Activated CD4-positive, alpha-beta memory T cell treated with anti-CD3 and anti-CD28 coated beads for 36 hours (primary cell): ENCODE measurements at regions of chr12 and their contacts with region 1.

Region 1: DNA sequence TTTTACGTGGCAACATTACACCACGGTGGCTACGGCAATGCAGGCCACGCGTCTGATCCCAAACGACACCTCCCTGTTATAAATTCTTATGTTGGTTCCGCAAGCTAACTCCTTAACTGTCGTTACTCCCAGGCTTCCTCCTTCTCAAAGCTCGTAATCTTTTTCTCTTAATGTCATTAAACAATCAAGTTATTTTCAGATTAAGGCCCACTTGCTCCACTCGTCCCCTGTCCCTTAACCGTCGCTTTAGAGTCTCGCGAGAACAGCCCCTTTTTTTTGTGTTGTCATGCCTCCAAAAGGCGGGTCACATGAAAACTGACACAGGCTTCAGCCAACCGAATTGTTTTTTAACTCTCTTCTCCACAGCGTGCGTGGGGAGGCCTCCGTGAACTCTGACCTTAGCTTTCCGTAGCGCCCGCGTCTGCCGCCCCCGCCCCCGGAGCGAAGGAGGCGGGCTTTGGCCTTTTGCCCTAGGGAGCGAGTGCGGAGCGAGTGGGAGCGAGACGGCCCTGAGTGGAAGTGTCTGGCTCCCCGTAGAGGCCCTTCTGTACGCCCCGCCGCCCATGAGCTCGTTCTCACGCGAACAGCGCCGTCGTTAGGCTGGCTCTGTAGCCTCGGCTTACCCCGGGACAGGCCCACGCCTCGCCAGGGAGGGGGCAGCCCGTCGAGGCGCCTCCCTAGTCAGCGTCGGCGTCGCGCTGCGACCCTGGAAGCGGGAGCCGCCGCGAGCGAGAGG is at the start of gene CAND1:
- DNase-seq: peak; percentile 96
- H3K4me3 Mint-ChIP-seq: peak within 1 kb of the TSS; percentile 95
- H3K27ac Mint-ChIP-seq: peak within 1 kb of the TSS; percentile 98
- H3K4me1 Mint-ChIP-seq: peaks cover 31% of the 10 kb centered on the region
- H3K27me3 Mint-ChIP-seq: no peaks in the 10 kb centered on the region
- total RNA-seq, gene CAND1: 213 to 219 TPM

Region 2: GRCh38 chr12:66288121-66288520 is 980.9 kb before region 1 on chr12:
- CTCF ChIA-PET with region 1: no interaction called
- POLR2A ChIA-PET with region 1: no interaction called
- intact Hi-C with region 1: loop called (anchors 10 kb)
- DNase-seq: peak; percentile 67
- H3K4me3 Mint-ChIP-seq: peak overlapping the region; percentile 49
- H3K27ac Mint-ChIP-seq: peak overlapping the region; percentile 44
- H3K4me1 Mint-ChIP-seq: peaks cover 62% of the 10 kb centered on the region
- H3K27me3 Mint-ChIP-seq: no peaks in the 10 kb centered on the region

Region 3: GRCh38 chr12:67161322-67161918 is 107.6 kb before region 1 on chr12:
- CTCF ChIA-PET with region 1: interaction called, 9 read pairs
- POLR2A ChIA-PET with region 1: interaction called, 3 read pairs
- intact Hi-C with region 1: loop called (anchors 1 kb)
- DNase-seq: peak; percentile 45
- H3K4me3 Mint-ChIP-seq: no peak overlapping the region
- H3K27ac Mint-ChIP-seq: no peak overlapping the region
- H3K4me1 Mint-ChIP-seq: no peaks in the 10 kb centered on the region
- H3K27me3 Mint-ChIP-seq: peaks cover 2% of the 10 kb centered on the region

Region 4: GRCh38 chr12:67452119-67452805 is 183.2 kb after region 1 on chr12:
- CTCF ChIA-PET with region 1: no interaction called
- POLR2A ChIA-PET with region 1: interaction called, 4 read pairs
- intact Hi-C with region 1: loop called (anchors 5 kb)
- DNase-seq: peak; percentile 42
- H3K4me3 Mint-ChIP-seq: peak overlapping the region; percentile 1
- H3K27ac Mint-ChIP-seq: no peak overlapping the region
- H3K4me1 Mint-ChIP-seq: peaks cover 48% of the 10 kb centered on the region
- H3K27me3 Mint-ChIP-seq: peaks cover 4% of the 10 kb centered on the region

Region 5: GRCh38 chr12:67630373-67631088 is 361.5 kb after region 1 on chr12:
- CTCF ChIA-PET with region 1: no interaction called
- POLR2A ChIA-PET with region 1: no interaction called
- intact Hi-C with region 1: loop called (anchors 5 kb)
- DNase-seq: peak; percentile 92
- H3K4me3 Mint-ChIP-seq: peak overlapping the region; percentile 58
- H3K27ac Mint-ChIP-seq: peak overlapping the region; percentile 81
- H3K4me1 Mint-ChIP-seq: peaks cover 68% of the 10 kb centered on the region
- H3K27me3 Mint-ChIP-seq: peaks cover 2% of the 10 kb centered on the region